ENCODE measurements at regions of chr19 and their contacts with region 1.

Region 1: DNA sequence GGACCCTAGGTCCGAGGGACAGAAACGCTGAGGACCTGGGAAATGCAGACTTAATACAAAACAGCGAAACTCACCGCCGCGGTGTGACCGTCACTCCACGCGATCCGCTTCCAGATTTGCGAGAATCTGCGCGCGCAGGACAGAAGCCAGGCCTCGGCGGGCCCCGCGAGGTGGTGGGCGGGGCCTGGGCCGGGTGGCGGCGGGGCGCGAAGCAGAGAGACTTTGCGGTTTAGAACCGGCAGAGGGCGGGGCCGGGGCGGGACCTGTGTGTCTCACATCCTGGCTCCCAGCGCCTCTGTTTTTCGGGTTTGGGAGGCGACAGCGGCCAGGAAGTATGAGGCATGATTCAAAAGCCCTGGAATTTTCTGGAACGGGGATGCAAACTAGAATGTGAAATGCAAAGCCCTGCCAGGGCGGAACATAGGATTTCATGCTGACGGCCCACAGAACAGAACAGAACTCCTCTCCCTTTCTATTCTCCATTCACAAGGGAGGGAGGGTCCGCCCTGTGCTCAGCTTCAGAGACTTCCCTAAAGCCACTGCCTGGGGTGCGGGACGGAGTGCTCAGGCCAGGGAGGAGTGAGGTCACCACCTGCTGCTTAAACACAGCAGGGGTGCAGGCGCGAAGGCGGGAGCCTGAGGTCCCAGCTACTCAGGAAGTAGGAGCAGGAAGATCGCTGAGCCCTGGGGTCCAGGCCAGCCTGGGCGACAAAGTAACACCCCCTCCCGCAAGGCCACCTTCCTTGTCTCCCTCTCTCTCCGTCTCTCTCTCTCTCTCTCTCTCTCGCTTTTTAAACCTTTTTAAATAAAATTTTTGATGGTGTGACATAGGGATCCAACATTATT is 44.3 kb downstream of the ZNF611 start:
- DNase-seq: peak; percentile 96
- ATAC-seq: peak; percentile 98 to 99 (median 99)
- H3K4me3 ChIP-seq: peak overlapping the region; percentile 69
- H3K27ac ChIP-seq: peak overlapping the region; percentile 72
- H3K4me1 ChIP-seq: peaks cover 4% of the 10 kb centered on the region
- H3K27me3 ChIP-seq: peaks cover 0 to 12% (median 0%) of the 10 kb centered on the region in 3 donors
- CTCF ChIP-seq: peak; percentile 30

Region 2: DNA sequence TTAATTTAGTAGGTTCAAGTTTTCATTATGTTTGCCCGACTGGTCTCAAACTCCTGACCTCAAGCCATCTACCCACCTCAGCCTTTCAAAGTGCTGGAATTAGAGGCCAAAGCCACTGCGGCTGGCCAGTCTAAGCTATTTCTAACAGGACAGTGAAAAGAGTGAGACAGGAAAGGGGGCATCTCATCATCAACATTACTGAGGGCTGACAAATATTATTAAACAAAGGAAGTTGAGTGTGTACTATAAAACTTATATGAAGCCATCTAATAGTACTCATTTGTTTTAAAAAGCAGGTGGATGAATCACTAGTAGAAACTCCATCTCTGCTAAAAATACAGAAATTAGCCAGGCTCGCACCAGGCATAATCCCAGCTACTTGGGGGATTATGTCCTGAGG is 19.9 kb after region 1 on chr19:
- intact Hi-C with region 1: no loop called
- DNase-seq: no peak
- ATAC-seq: no peak
- H3K4me3 ChIP-seq: no peak overlapping the region
- H3K27ac ChIP-seq: no peak overlapping the region
- H3K4me1 ChIP-seq: no peaks in the 10 kb centered on the region
- H3K27me3 ChIP-seq: no peaks in the 10 kb centered on the region
- CTCF ChIP-seq: no peak

Region 3: GRCh38 chr19:52734893-52735661 is 44.5 kb after region 1 on chr19 and contains the start of gene ZNF611:
- intact Hi-C with region 1: loop called in 1 of 2 experiments (anchors 2 kb)
- DNase-seq: peak; percentile 98 to 99
- ATAC-seq: peak; percentile 99
- H3K4me3 ChIP-seq: peak within 1 kb of the TSS; percentile 84
- H3K27ac ChIP-seq: peak within 1 kb of the TSS; percentile 91
- H3K4me1 ChIP-seq: peaks cover 7% of the 10 kb centered on the region
- H3K27me3 ChIP-seq: peaks cover 0 to 3% (median 0%) of the 10 kb centered on the region in 3 donors
- CTCF ChIP-seq: peak; percentile 10
- total RNA-seq, gene ZNF611: 2.5 to 4.8 (median 4.1) TPM